Activated naive CD8-positive, alpha-beta T cell treated with anti-CD3 and anti-CD28 coated beads, Interleukin-2, amount 10 ng/mL, durations not matched to agents 7 days and 5 days (primary cell): ENCODE measurements at regions of chr14 and their contacts with region 1.

Region 1: GRCh38 chr14:99230208-99231151 is 41.5 kb downstream of the BCL11B start:
- DNase-seq: peak; percentile 86
- ATAC-seq: peak; percentile 53
- H3K4me3 Mint-ChIP-seq: peak overlapping the region; percentile 86
- H3K27ac Mint-ChIP-seq: peak overlapping the region; percentile 97
- H3K4me1 Mint-ChIP-seq: peaks cover 88% of the 10 kb centered on the region
- H3K27me3 Mint-ChIP-seq: no peaks in the 10 kb centered on the region

Region 2: DNA sequence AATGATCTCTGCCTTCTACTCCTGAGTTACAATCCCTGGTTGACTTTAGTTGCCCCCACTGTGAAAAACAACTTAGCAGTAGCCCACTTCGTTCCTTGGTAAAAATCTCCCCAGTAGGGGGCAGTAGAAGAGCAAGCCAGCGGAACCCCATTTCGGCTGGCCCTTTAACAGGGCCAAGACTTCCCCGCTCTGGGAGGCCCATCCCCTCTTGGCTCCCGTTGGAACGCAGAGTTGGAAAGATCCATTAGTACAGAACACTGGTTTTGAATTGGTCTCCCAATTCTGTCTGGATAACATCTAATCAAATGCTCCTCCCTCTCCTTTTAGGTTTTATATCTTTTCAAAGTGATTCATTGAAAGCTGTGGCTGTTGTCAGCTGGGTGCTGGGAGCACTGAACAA is 1091.8 kb before region 1 on chr14:
- POLR2A ChIA-PET with region 1: interaction called, 11 read pairs
- DNase-seq: peak; percentile 59
- ATAC-seq: peak; percentile 55
- H3K4me3 Mint-ChIP-seq: peak overlapping the region; percentile 79
- H3K27ac Mint-ChIP-seq: peak overlapping the region; percentile 94
- H3K4me1 Mint-ChIP-seq: peaks cover 68% of the 10 kb centered on the region
- H3K27me3 Mint-ChIP-seq: no peaks in the 10 kb centered on the region

Region 3: DNA sequence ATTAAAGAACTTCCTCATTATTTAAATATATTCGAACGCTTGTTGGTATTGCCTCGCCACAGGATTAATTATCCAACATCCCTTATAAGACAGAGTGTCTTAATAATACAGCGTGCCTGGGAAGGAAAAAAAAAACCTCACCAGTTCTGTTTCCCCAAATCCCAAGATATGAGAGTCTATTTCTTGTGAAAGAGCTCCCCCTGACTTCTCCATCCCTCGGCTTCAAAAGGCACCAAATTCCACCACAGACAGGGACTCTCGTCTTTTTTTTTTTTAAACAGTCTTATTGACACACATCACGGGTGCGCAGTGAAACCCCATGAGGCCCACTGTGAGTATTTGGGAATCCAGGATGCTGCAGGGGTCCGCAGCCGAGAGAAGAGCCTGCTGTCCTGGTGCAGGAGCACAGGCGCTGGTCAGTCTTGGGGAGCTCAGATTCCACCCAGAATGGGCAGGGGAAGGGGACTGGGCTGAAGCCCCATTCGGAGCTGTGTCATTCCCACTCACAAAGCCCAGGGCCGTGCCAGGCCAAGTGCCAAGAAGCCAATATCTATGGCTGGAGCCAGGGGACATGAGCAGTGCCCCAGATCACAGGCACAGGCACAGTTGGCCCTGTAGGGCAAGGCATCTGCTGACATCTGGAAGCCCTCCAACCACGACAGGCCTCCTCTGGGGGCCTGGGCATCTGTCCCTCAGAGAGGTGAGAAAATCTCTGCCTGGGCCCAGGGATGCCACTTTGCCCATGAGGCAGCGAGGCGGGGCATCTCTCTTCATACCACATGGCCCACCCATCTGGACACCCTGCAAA is 30.4 kb before region 1 on chr14:
- POLR2A ChIA-PET with region 1: interaction called, 28 read pairs
- DNase-seq: no peak
- ATAC-seq: no peak
- H3K4me3 Mint-ChIP-seq: peak overlapping the region; percentile 67
- H3K27ac Mint-ChIP-seq: peak overlapping the region; percentile 72
- H3K4me1 Mint-ChIP-seq: peaks cover 90% of the 10 kb centered on the region
- H3K27me3 Mint-ChIP-seq: no peaks in the 10 kb centered on the region

Region 4: GRCh38 chr14:99245564-99246511 is 15.4 kb after region 1 on chr14:
- POLR2A ChIA-PET with region 1: interaction called, 117 read pairs
- DNase-seq: peak; percentile 70
- ATAC-seq: no peak
- H3K4me3 Mint-ChIP-seq: peak overlapping the region; percentile 85
- H3K27ac Mint-ChIP-seq: peak overlapping the region; percentile 95
- H3K4me1 Mint-ChIP-seq: peaks cover 77% of the 10 kb centered on the region
- H3K27me3 Mint-ChIP-seq: no peaks in the 10 kb centered on the region

Region 5: DNA sequence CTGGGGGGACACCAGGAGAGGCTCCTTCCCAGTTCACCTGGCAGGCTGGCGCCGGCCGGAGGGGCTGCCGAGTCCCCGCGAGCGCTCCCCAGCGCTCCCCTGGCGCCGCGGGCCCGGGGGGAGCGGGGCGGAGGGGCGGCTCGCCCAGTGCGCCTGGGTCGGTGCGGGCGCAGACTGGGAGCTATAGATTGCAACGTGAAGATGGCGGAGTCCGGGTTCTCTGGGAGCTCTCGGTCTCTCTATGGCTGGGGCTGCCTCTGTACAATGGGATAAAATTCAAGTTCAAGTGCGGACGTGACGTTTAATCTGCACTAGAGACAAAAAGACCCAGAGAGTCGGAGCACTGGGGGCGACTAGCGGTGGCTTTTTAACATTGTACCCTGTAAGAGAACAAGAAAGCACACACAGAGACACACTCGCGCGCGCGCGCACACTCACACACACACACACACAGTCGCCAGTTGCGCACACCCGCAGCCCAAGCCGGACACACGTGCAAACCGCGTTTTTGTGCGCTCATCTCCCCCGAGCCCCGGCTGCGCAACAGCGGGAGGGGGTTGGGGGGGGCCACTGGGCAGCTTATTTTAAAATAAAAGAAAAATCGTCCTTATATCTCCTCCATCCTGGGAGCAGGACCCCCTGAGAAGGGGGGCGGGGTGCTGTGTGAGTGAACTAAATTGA is 41.6 kb after region 1 on chr14 and contains the start of gene BCL11B:
- POLR2A ChIA-PET with region 1: interaction called, 796 read pairs
- DNase-seq: peak; percentile 87
- ATAC-seq: peak; percentile 77
- H3K4me3 Mint-ChIP-seq: peak within 1 kb of the TSS; percentile 98
- H3K27ac Mint-ChIP-seq: peak within 1 kb of the TSS; percentile 99
- H3K4me1 Mint-ChIP-seq: peaks cover 26% of the 10 kb centered on the region
- H3K27me3 Mint-ChIP-seq: peaks cover 16% of the 10 kb centered on the region
- total RNA-seq, gene BCL11B: 99.5 to 104 TPM

Region 6: DNA sequence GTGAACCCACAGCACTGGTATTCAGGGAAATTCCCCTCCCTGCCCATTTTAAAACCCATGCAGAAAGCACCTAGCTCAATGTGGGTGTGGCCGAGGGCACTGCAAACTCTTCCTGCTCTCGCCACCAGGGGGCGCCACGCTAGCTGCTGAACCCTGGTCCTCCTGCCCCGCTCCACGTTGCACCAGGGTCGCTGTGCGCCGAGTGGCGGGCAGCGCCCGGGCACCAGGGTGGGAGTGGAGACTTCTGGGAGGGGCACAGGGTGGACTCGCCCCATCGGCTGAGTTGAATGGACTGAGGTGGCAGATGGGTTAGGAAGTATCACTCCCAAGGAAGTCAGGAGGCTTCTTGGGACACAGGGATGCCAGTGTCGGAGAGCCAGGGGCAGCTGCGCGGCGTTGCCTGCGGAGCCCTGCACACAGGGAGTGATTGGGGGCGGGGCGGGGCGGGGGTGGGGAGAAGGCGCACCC is 89.7 kb after region 1 on chr14:
- POLR2A ChIA-PET with region 1: no interaction called
- DNase-seq: peak; percentile 85
- ATAC-seq: peak; percentile 80
- H3K4me3 Mint-ChIP-seq: peak overlapping the region; percentile 22
- H3K27ac Mint-ChIP-seq: no peak overlapping the region
- H3K4me1 Mint-ChIP-seq: peaks cover 4% of the 10 kb centered on the region
- H3K27me3 Mint-ChIP-seq: no peaks in the 10 kb centered on the region